ENCODE measurements at regions of chr1 and their contacts with region 1.

Region 1: GRCh38 chr1:26874896-26875295 is 11.9 kb downstream of the SFN start:
- DNase-seq: no peak
- H3K4me3 ChIP-seq: no peak overlapping the region
- H3K4me3 Mint-ChIP-seq: no peak overlapping the region
- H3K27ac Mint-ChIP-seq: no peak overlapping the region
- H3K4me1 ChIP-seq: no peaks in the 10 kb centered on the region
- H3K4me1 Mint-ChIP-seq: no peaks in the 10 kb centered on the region
- H3K27me3 ChIP-seq: no peaks in the 10 kb centered on the region
- H3K27me3 Mint-ChIP-seq: no peaks in the 10 kb centered on the region
- CTCF ChIP-seq: no peak

Region 2: DNA sequence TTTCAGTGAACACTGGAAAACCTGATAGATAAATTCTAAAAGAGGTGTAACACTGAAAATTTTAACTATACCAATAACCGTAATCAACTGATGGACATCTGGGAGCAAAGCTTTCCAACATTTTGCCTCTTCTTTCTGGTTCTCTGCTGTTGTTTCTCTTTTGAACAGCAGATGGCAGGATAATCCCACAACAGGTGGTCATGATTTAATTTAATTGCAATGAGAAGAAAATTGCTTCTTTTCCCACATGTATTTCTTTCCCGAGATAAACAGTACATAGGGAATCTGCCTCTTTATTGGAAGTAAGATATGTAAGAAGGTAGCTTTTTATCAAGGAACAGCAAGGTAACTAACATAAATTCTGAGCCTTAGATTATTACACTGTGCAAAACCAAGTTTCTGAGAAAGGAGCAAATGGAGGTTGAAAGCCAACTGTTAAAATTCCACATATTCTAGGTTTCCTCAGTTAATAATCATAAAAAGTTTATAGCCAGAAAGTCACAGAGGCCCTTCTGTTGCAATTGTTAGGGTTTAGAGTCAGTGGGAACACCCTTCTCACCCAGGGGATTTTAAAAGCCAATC is 272.4 kb before region 1 on chr1:
- CTCF ChIA-PET with region 1: no interaction called
- POLR2A ChIA-PET with region 1: interaction called, 3 read pairs
- intact Hi-C with region 1: loop called (anchors 10 kb)
- DNase-seq: peak; percentile 46 to 63
- H3K4me3 ChIP-seq: no peak overlapping the region
- H3K4me3 Mint-ChIP-seq: no peak overlapping the region
- H3K27ac Mint-ChIP-seq: no peak overlapping the region
- H3K4me1 ChIP-seq: no peaks in the 10 kb centered on the region
- H3K4me1 Mint-ChIP-seq: no peaks in the 10 kb centered on the region
- H3K27me3 ChIP-seq: no peaks in the 10 kb centered on the region
- H3K27me3 Mint-ChIP-seq: no peaks in the 10 kb centered on the region
- CTCF ChIP-seq: peak; percentile 55 to 60

Region 3: DNA sequence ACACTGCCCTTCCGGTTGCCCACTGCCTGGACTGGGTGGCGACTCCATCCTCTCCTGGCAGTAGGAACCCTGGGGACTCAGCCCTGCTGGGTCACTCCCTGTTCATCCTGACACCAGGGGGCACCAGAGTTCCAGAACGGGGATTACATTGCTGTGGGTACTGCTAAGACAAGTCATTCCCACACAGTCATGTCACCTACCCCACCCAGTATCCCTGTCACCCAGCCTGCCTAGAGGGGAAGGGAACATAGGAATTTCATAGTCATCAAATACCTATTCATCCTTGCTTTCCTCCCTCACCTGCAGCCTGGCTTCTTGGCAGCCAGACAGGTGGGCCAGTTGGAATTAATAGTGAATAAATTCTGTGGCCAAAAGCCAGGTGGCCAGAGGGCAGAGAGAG is 21.7 kb before region 1 on chr1:
- CTCF ChIA-PET with region 1: no interaction called
- POLR2A ChIA-PET with region 1: no interaction called
- intact Hi-C with region 1: loop called (anchors 1 kb)
- DNase-seq: peak; percentile 84 to 87
- H3K4me3 ChIP-seq: no peak overlapping the region
- H3K4me3 Mint-ChIP-seq: no peak overlapping the region
- H3K27ac Mint-ChIP-seq: no peak overlapping the region
- H3K4me1 ChIP-seq: no peaks in the 10 kb centered on the region
- H3K4me1 Mint-ChIP-seq: no peaks in the 10 kb centered on the region
- H3K27me3 ChIP-seq: no peaks in the 10 kb centered on the region
- H3K27me3 Mint-ChIP-seq: no peaks in the 10 kb centered on the region
- CTCF ChIP-seq: peak; percentile 54 to 72

Region 4: GRCh38 chr1:26864610-26865527 is 10.0 kb before region 1 on chr1:
- CTCF ChIA-PET with region 1: interaction called, 4 read pairs
- POLR2A ChIA-PET with region 1: no interaction called
- intact Hi-C with region 1: loop called (anchors 1 kb)
- DNase-seq: peak; percentile 95 to 97
- H3K4me3 ChIP-seq: peak overlapping the region; percentile 56
- H3K4me3 Mint-ChIP-seq: peak overlapping the region; percentile 82
- H3K27ac Mint-ChIP-seq: peak overlapping the region; percentile 94
- H3K4me1 ChIP-seq: 0 out of 2 replicates have a peak, but pooled peaks cover 7% of the 10 kb centered on the region
- H3K4me1 Mint-ChIP-seq: peaks cover 14% of the 10 kb centered on the region
- H3K27me3 ChIP-seq: no peaks in the 10 kb centered on the region
- H3K27me3 Mint-ChIP-seq: no peaks in the 10 kb centered on the region
- CTCF ChIP-seq: no peak